Heart right ventricle (tissue), 16 donors: ENCODE measurements at regions of chr2 and their contacts with region 1.

Region 1: GRCh38 chr2:197804049-197804757 is at the start of gene PLCL1:
- DNase-seq: peak; percentile 93 to 94
- ATAC-seq: peak; percentile 93 to 96 (median 95)
- H3K4me3 ChIP-seq: peak within 1 kb of the TSS; percentile 69 to 89 (median 84)
- H3K27ac ChIP-seq: peak within 1 kb of the TSS; percentile 63 to 88 (median 84)
- H3K4me1 ChIP-seq: peaks cover 0 to 54% (median 21%) of the 10 kb centered on the region in 9 donors
- H3K27me3 ChIP-seq: peaks cover 0 to 23% (median 0%) of the 10 kb centered on the region in 7 donors
- CTCF ChIP-seq: peak in 3 of 9 donors; percentile 6 to 49 (median 25)
- total RNA-seq, gene PLCL1: 76.8 to 131 (median 108) TPM

Region 2: DNA sequence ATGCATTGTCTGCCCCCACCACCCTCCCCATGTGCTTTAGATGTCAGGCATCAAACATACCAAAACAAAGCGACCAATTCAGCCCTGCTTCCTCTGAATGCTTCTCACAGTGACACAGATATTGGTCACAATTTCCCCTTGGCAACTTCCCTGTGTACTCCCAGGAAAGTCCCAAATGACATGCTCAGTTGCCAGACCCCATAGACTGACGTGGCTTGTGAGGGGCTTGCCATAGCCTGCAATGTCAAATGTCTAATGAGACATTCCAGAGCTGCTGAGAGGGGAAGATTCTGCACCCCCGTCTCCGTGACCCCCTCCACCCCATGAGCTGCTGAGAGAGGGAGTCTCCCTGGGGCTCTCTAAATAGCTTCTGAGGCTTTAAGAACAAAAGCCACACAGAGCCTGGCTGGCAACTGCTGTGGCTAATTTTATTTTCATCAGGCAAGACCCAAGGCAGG is 176.1 kb before region 1 on chr2:
- intact Hi-C with region 1: no loop called
- DNase-seq: peak in 1 of 2 donors; percentile 23
- ATAC-seq: peak in 7 of 8 donors; percentile 69 to 92 (median 81)
- H3K4me3 ChIP-seq: no peak overlapping the region
- H3K27ac ChIP-seq: peak overlapping the region in 9 of 10 donors; percentile 21 to 79 (median 63)
- H3K4me1 ChIP-seq: peaks cover 0 to 20% (median 11%) of the 10 kb centered on the region in 9 donors
- H3K27me3 ChIP-seq: no peaks in the 10 kb centered on the region
- CTCF ChIP-seq: no peak

Region 3: GRCh38 chr2:197786010-197786877 is 18.0 kb before region 1 on chr2:
- intact Hi-C with region 1: no loop called
- DNase-seq: peak; percentile 9 to 33
- ATAC-seq: peak in 7 of 8 donors; percentile 42 to 83 (median 74)
- H3K4me3 ChIP-seq: peak overlapping the region; percentile 36 to 58 (median 51)
- H3K27ac ChIP-seq: no peak overlapping the region
- H3K4me1 ChIP-seq: peaks cover 0 to 12% (median 7%) of the 10 kb centered on the region in 9 donors
- H3K27me3 ChIP-seq: peaks cover 0 to 37% (median 31%) of the 10 kb centered on the region in 7 donors
- CTCF ChIP-seq: peak in 8 of 9 donors; percentile 25 to 57 (median 53)

Region 4: DNA sequence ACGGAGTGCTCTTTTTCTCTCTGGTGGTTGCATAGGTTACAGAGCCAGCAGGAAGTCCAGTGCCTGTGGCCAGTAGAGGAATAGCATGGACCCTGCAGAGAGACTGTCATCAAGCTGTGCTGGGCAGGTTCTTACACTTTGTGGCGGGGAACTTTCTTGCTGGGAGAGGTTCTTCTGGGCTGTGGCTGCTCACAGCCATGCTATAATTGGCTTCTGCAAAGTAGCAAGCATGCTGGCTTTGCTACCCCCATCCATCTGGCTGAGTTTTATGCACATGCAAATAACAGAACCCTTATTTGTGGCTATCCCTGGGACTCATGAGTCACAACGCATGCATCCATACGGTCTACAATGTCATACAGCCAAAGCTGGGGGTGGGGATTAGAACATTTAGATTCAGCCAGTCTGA is 69.1 kb after region 1 on chr2:
- intact Hi-C with region 1: loop called in 2 of 10 experiments (anchors 10 kb)
- DNase-seq: no peak
- ATAC-seq: peak in 7 of 8 donors; percentile 33 to 77 (median 58)
- H3K4me3 ChIP-seq: no peak overlapping the region
- H3K27ac ChIP-seq: peak overlapping the region in 5 of 10 donors; percentile 2 to 23 (median 16)
- H3K4me1 ChIP-seq: peaks cover 0 to 86% (median 59%) of the 10 kb centered on the region in 9 donors
- H3K27me3 ChIP-seq: no peaks in the 10 kb centered on the region
- CTCF ChIP-seq: no peak

Region 5: DNA sequence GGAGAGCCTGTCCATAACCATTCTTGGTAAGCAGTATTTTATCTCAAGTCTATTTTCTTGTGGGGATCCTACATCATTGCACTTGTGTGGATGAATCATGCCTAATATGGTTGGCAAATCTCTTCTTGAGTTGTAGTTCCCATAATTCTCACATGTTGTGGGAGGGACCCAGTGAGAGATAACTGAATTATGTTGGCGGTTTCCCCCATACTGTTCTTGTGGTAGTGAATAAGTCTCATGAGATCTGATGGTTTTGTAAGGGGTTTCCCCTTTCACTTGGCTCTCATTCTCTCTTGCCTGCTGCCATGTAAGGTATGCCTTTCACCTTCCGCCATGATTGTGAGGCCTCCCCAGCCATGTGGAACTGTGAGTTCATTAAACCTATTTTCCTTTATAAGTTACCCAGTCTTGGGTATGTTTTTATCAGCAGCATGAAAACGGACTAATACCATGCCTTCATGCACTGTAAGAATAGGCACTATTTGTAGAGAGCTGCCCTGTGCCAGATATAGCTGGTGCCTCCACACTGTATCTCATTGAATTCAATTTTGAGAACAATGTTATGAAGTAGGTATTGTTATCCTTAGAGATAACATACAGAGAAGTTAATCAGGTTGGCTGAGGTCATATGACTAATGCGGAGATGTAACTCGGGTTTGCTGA is 148.5 kb after region 1 on chr2:
- intact Hi-C with region 1: loop called in 3 of 10 experiments (anchors 5 to 10 kb)
- DNase-seq: no peak
- ATAC-seq: no peak
- H3K4me3 ChIP-seq: no peak overlapping the region
- H3K27ac ChIP-seq: peak overlapping the region in 2 of 10 donors; percentile 62 to 64
- H3K4me1 ChIP-seq: peaks cover 4 to 74% (median 28%) of the 10 kb centered on the region in 9 donors
- H3K27me3 ChIP-seq: no peaks in the 10 kb centered on the region
- CTCF ChIP-seq: no peak

Region 6: GRCh38 chr2:197992482-197993133 is 188.4 kb after region 1 on chr2:
- intact Hi-C with region 1: loop called in 1 of 10 experiments (anchors 10 kb)
- DNase-seq: no peak
- ATAC-seq: no peak
- H3K4me3 ChIP-seq: no peak overlapping the region
- H3K27ac ChIP-seq: no peak overlapping the region
- H3K4me1 ChIP-seq: peaks cover 2 to 44% (median 30%) of the 10 kb centered on the region in 9 donors
- H3K27me3 ChIP-seq: no peaks in the 10 kb centered on the region
- CTCF ChIP-seq: no peak

Region 7: DNA sequence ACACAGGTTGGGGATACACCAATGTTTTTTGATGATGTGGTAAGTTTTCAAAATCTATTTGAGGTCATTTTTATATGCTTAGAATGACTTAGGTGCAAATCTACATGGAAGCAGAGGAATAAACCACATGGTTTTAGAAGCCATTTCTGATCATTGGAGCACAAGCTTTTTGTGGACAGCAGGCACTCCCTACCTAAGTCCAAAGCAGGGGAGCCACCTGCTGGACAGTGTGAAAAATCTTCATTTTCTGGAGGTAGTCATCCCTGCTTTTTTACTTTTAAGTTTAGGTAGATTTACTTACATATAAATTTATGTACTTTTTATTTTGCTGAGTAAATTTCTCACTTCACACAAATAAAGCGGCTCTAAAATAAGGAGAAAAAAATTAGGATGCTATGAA is 323.4 kb after region 1 on chr2:
- intact Hi-C with region 1: loop called (anchors 1 to 5 kb)
- DNase-seq: peak; percentile 22 to 23
- ATAC-seq: peak in 7 of 8 donors; percentile 55 to 86 (median 79)
- H3K4me3 ChIP-seq: no peak overlapping the region
- H3K27ac ChIP-seq: no peak overlapping the region
- H3K4me1 ChIP-seq: peaks cover 0 to 35% (median 5%) of the 10 kb centered on the region in 9 donors
- H3K27me3 ChIP-seq: no peaks in the 10 kb centered on the region
- CTCF ChIP-seq: peak; percentile 37 to 78 (median 73)

Region 8: GRCh38 chr2:198706476-198707082 is 902.4 kb after region 1 on chr2:
- intact Hi-C with region 1: no loop called
- DNase-seq: no peak
- ATAC-seq: no peak
- H3K4me3 ChIP-seq: no peak overlapping the region
- H3K27ac ChIP-seq: no peak overlapping the region
- H3K4me1 ChIP-seq: no peaks in the 10 kb centered on the region
- H3K27me3 ChIP-seq: peaks cover 0 to 2% (median 0%) of the 10 kb centered on the region in 7 donors
- CTCF ChIP-seq: no peak